Activated CD4-positive, alpha-beta T cell treated with anti-CD3 and anti-CD28 coated beads for 36 hours (primary cell): ENCODE measurements at regions of chr10 and their contacts with region 1.

Region 1: GRCh38 chr10:124530215-124530665 is 68.6 kb downstream of the LHPP start:
- DNase-seq: peak; percentile 92
- ATAC-seq: peak; percentile 97
- H3K4me3 Mint-ChIP-seq: no peak overlapping the region
- H3K27ac Mint-ChIP-seq: no peak overlapping the region
- H3K4me1 Mint-ChIP-seq: peaks cover 4% of the 10 kb centered on the region
- H3K27me3 Mint-ChIP-seq: no peaks in the 10 kb centered on the region

Region 2: GRCh38 chr10:124127965-124128827 is 402.0 kb before region 1 on chr10:
- CTCF ChIA-PET with region 1: no interaction called
- POLR2A ChIA-PET with region 1: no interaction called
- intact Hi-C with region 1: no loop called
- DNase-seq: no peak
- ATAC-seq: no peak
- H3K4me3 Mint-ChIP-seq: no peak overlapping the region
- H3K27ac Mint-ChIP-seq: no peak overlapping the region
- H3K4me1 Mint-ChIP-seq: no peaks in the 10 kb centered on the region
- H3K27me3 Mint-ChIP-seq: no peaks in the 10 kb centered on the region

Region 3: DNA sequence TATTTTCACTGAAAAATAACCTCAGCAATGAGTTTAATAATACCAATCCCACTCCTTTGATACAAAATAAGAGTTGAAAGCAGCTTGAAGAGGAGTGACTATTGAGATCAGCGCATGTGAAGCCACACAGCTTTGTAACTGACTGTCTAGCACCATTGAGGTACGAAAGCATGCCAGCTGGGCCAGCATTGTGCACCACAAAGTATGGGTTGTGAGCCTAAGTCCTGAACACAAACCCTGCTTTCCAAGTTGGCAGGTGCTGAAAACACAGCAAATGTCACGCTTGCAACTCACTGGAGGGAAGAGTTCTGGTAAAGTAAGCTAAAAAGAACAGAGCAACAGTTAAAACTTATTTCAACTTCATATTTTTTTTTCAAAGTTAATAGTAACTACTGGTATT is 217.9 kb after region 1 on chr10:
- CTCF ChIA-PET with region 1: interaction called, 54 read pairs
- POLR2A ChIA-PET with region 1: no interaction called
- intact Hi-C with region 1: loop called in 1 of 2 experiments (anchors 1 kb)
- DNase-seq: no peak
- ATAC-seq: no peak
- H3K4me3 Mint-ChIP-seq: no peak overlapping the region
- H3K27ac Mint-ChIP-seq: no peak overlapping the region
- H3K4me1 Mint-ChIP-seq: peaks cover 25% of the 10 kb centered on the region
- H3K27me3 Mint-ChIP-seq: no peaks in the 10 kb centered on the region

Region 4: GRCh38 chr10:124827474-124827873 is 297.2 kb after region 1 on chr10:
- CTCF ChIA-PET with region 1: interaction called, 28 read pairs
- POLR2A ChIA-PET with region 1: no interaction called
- intact Hi-C with region 1: loop called (anchors 1 kb)
- DNase-seq: peak; percentile 11
- ATAC-seq: no peak
- H3K4me3 Mint-ChIP-seq: no peak overlapping the region
- H3K27ac Mint-ChIP-seq: no peak overlapping the region
- H3K4me1 Mint-ChIP-seq: peaks cover 2% of the 10 kb centered on the region
- H3K27me3 Mint-ChIP-seq: no peaks in the 10 kb centered on the region

Region 5: GRCh38 chr10:124975977-124976514 is 445.8 kb after region 1 on chr10:
- CTCF ChIA-PET with region 1: no interaction called
- POLR2A ChIA-PET with region 1: no interaction called
- intact Hi-C with region 1: loop called in 1 of 2 experiments (anchors 10 kb)
- DNase-seq: no peak
- ATAC-seq: peak; percentile 86
- H3K4me3 Mint-ChIP-seq: no peak overlapping the region
- H3K27ac Mint-ChIP-seq: peak overlapping the region; percentile 55
- H3K4me1 Mint-ChIP-seq: peaks cover 17% of the 10 kb centered on the region
- H3K27me3 Mint-ChIP-seq: no peaks in the 10 kb centered on the region

Region 6: GRCh38 chr10:125060826-125061556 is 530.8 kb after region 1 on chr10:
- CTCF ChIA-PET with region 1: interaction called, 3 read pairs
- POLR2A ChIA-PET with region 1: interaction called, 3 read pairs
- intact Hi-C with region 1: loop called in 1 of 2 experiments (anchors 1 kb)
- DNase-seq: peak; percentile 71
- ATAC-seq: peak; percentile 45
- H3K4me3 Mint-ChIP-seq: no peak overlapping the region
- H3K27ac Mint-ChIP-seq: no peak overlapping the region
- H3K4me1 Mint-ChIP-seq: peaks cover 15% of the 10 kb centered on the region
- H3K27me3 Mint-ChIP-seq: peaks cover 30% of the 10 kb centered on the region